Heart left ventricle (tissue), 16 donors: ENCODE measurements at regions of chr5 and their contacts with region 1.

Region 1: DNA sequence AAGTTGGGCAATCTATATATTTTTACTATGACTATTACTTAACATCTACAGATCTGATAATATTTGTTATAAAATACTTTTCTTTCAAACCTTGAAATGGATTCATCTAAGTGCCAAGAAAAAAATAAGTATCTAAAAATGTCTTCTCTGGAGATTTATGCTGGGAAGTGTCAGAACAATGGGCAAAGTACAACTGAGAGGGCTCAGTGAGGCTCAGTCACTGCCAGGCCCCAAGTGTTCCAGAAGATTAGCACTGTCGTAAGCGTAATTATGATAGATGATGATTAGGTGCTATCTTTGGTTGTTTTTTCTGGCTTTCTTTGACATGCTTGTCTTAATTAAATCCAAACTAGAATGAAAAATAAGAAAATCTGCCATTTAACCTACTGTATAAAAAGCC is 72.2 kb upstream of the ADAMTS19 start:
- DNase-seq: no peak
- ATAC-seq: no peak
- H3K4me3 ChIP-seq: no peak overlapping the region
- H3K27ac ChIP-seq: no peak overlapping the region
- H3K4me1 ChIP-seq: no peaks in the 10 kb centered on the region
- H3K27me3 ChIP-seq: no peaks in the 10 kb centered on the region
- CTCF ChIP-seq: no peak
- POLR2A ChIP-seq: no peak

Region 2: DNA sequence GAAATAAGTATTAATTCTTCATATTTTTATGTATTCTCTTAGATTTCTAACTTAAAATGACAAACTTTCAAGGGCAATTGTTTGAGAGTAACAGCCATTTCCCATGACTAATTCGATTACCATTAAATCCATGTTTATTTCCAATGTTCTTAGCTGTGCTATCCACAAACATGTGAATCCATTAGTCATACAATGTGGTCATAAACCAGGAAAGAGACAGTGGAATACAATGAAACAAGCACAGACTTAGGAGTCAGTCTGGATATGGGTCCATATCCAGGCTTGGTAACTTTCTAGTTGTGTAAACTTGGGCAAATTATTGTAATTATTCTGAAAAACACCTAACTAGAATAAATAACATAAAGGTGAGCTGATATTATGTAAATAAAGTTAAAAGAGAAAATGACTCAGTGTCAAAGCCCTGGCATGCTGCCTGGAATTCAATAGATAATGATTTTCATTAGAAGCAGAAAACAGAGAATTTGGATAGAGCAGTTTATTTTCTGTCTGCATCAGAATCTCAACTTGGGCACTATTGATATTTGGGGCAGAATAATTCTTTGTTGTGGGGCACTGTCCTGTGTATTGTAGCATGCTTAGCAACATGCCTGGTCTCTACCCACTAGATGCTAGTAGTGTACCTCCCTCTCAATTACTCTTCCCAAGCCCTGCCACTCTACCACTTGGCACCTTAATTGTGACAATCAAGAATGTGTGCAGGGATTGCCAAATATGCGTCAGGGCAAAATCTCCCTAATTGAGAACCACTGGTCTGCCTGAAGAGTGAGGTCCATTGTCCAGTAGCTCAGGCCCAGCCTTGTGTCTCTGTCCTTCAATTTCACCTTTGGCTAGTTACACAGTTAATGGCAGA is 467.4 kb before region 1 on chr5:
- intact Hi-C with region 1: no loop called
- DNase-seq: peak in 4 of 5 donors; percentile 33 to 62 (median 43)
- ATAC-seq: peak; percentile 88 to 95 (median 94)
- H3K4me3 ChIP-seq: no peak overlapping the region
- H3K27ac ChIP-seq: peak overlapping the region in 10 of 12 donors; percentile 2 to 74 (median 65)
- H3K4me1 ChIP-seq: peaks cover 0 to 11% (median 0%) of the 10 kb centered on the region in 12 donors
- H3K27me3 ChIP-seq: no peaks in the 10 kb centered on the region
- CTCF ChIP-seq: no peak
- POLR2A ChIP-seq: no peak

Region 3: DNA sequence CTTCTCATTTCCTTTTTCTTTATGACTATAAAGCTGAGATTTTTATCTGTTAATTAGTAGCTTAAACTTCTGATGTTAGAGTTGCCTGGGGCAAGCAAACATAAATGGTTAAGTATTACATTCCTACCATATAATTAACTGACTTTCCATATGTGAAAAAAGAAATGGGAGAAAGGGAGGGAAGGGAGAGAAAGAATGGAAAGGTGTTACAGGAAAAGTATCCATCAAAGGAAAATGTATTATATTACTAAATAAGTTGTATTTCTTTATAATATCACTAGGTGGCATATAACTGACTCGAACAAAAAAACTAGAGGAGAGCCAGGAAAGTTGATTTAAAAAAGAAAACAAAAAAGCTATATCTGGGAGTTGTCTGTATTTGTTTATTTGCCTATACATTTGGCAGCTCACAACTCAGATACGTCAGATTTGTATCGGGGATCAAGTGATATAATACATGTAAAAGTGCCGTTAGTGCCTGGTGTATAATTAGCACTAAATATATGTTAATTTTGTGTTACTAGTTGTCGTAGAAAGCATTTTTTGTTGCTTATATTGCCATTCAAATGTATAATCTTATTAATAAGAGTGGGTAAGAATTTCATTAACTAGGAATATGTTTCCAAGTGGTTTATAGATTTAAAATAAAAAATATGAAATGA is 12.5 kb after region 1 on chr5:
- intact Hi-C with region 1: loop called in 1 of 10 experiments (anchors 2 kb)
- DNase-seq: no peak
- ATAC-seq: no peak
- H3K4me3 ChIP-seq: no peak overlapping the region
- H3K27ac ChIP-seq: no peak overlapping the region
- H3K4me1 ChIP-seq: no peaks in the 10 kb centered on the region
- H3K27me3 ChIP-seq: no peaks in the 10 kb centered on the region
- CTCF ChIP-seq: peak in 8 of 12 donors; percentile 7 to 34 (median 27)
- POLR2A ChIP-seq: no peak

Region 4: DNA sequence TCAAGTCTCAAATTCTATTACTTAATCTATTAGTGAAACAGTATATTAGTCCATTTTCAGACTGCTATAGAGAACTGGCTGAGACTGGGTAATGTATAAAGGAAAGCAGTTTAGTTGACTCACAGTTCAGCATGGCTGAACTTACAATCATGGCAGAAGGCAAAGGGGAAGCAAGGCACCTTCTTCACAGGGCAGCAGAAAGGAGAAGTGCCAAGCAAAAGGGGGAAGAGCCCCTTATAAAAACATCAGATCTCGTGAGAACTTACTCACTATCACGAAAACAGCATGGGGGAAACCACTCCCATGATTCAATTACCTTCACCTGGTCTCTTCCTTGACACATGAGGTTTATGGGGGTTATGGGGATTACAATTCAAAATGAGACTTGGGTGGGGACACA is 448.4 kb after region 1 on chr5:
- intact Hi-C with region 1: no loop called
- DNase-seq: no peak
- ATAC-seq: no peak
- H3K4me3 ChIP-seq: no peak overlapping the region
- H3K27ac ChIP-seq: no peak overlapping the region
- H3K4me1 ChIP-seq: no peaks in the 10 kb centered on the region
- H3K27me3 ChIP-seq: peaks cover 0 to 12% (median 0%) of the 10 kb centered on the region in 9 donors
- CTCF ChIP-seq: no peak
- POLR2A ChIP-seq: no peak